ENCODE measurements at regions of chr4 and their contacts with region 1.

Region 1: DNA sequence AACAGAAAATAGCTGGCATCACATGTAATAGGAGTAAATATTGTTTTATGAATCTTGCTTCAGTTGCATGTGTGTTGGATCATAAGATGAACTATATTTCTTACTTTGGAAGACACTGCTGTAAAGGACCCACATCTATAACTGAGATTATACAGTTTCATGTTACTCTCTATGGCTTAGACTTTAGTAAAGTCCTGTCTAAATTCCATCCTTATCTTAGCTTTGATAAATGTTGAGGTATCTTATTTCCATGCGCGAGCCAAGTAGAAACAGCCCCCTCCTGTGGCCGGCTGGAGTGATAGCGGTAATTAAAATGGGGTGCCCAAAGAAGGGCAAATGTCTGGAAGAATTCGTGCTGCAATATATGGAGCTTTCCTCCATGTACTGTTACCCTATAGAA is 43.0 kb downstream of the CCDC158 start:
- DNase-seq: peak; percentile 64
- H3K4me3 Mint-ChIP-seq: no peak overlapping the region
- H3K27ac Mint-ChIP-seq: no peak overlapping the region
- H3K4me1 Mint-ChIP-seq: peaks cover 12% of the 10 kb centered on the region
- H3K27me3 Mint-ChIP-seq: no peaks in the 10 kb centered on the region
- CTCF ChIP-seq: no peak

Region 2: GRCh38 chr4:75623026-75623425 is 754.9 kb before region 1 on chr4:
- CTCF ChIA-PET with region 1: no interaction called
- intact Hi-C with region 1: no loop called
- DNase-seq: no peak
- H3K4me3 Mint-ChIP-seq: no peak overlapping the region
- H3K27ac Mint-ChIP-seq: no peak overlapping the region
- H3K4me1 Mint-ChIP-seq: no peaks in the 10 kb centered on the region
- H3K27me3 Mint-ChIP-seq: no peaks in the 10 kb centered on the region
- CTCF ChIP-seq: no peak

Region 3: DNA sequence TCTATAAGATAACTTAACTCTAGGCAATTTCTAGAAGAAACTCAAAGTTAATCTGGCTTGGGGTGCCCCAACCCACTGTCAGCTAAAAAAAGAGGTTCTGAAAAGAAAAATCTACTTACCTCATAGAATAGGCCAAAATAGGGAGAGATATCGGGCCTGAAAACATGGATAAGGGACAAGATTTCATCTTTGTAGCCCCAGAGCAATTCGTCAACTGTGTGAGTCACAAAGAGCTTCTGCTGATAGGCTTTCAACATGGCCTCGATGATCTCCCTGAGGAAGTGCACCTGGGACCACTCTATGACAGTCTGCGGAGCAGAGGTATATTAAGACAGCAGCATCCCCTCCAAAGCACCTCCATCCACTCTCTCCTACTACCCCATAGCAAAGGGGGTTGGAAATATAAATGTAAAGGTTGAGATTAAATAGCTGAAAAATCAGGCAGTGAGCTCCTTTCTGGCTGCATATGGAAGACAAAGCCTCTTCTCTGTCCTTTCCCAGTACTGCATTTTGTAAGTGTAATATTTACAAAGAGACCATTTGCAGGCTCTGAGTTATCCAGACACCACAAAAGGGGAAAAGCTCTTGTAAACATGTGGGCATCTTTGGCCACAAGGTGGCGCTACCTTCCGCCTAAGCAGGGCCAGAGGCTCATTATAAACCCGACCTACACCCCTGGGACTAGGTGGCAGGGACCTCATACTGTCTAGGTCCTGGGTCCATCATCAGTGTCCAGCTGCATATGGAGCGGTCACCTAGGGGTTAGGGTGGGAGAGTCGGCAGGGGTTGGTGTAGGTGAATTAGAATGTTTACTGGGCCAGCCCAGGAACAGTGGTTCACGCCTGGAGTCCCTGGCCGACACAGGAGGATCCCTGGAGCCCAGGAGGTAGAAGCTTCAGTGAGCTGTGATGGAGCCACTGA is 198.3 kb before region 1 on chr4:
- CTCF ChIA-PET with region 1: interaction called, 32 read pairs
- intact Hi-C with region 1: loop called (anchors 1 kb)
- DNase-seq: peak; percentile 78
- H3K4me3 Mint-ChIP-seq: no peak overlapping the region
- H3K27ac Mint-ChIP-seq: no peak overlapping the region
- H3K4me1 Mint-ChIP-seq: no peaks in the 10 kb centered on the region
- H3K27me3 Mint-ChIP-seq: no peaks in the 10 kb centered on the region
- CTCF ChIP-seq: peak; percentile 79

Region 4: GRCh38 chr4:76251441-76252270 is 126.3 kb before region 1 on chr4 and contains the start of gene FAM47E:
- CTCF ChIA-PET with region 1: interaction called, 13 read pairs
- intact Hi-C with region 1: loop called (anchors 5 kb)
- DNase-seq: peak; percentile 80
- H3K4me3 Mint-ChIP-seq: peak within 1 kb of the TSS; percentile 82
- H3K27ac Mint-ChIP-seq: peak within 1 kb of the TSS; percentile 67
- H3K4me1 Mint-ChIP-seq: peaks cover 9% of the 10 kb centered on the region
- H3K27me3 Mint-ChIP-seq: no peaks in the 10 kb centered on the region
- CTCF ChIP-seq: peak; percentile 41
- total RNA-seq, gene FAM47E: 0.57 and 1.1 TPM in 2 replicates

Region 5: DNA sequence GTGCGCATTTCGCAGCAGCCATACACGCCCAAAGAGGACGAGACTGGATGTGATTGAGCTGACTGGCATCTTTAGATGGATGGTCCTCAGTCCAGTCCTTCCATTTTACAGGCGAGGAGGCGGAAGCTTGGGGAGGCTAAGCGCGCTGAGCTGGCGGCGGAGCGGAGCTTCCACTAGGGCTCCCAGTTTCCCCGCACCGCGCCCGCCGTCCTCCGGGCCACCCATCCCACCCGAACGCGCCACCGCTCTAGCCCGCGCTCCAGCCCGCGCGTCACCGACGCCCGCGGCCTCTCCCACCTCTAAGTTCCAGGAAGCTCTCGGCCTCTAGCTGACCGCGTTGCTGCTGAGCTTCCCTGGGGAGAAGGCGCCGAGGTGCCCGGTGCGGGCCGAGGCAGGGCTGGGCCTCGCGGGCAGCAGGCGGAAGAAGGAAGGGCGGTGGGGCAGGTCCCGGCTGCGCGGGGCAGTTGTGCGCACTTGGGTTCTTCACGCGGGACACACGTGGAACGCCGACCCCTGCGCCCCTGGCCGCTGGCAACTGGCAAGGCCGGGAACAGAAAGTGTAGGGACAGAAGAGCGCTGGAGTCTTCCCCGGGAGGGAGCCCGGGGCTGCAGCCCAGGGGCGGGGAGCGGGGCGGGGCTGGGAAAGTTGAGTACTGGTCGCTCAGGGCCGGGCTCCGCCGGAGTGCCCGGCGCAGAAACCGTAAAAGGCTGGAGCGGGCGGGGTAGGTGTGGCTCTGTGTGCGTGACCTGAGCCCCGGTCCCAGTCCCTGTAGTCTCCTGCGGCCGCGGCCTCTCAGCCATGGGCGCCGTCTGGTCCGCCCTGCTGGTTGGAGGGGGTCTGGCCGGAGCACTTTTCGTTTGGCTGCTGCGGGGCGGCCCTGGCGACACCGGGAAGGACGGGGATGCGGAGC is 71.7 kb before region 1 on chr4 and contains the start of gene STBD1:
- CTCF ChIA-PET with region 1: interaction called, 16 read pairs
- intact Hi-C with region 1: loop called (anchors 2 kb)
- DNase-seq: peak; percentile 77
- H3K4me3 Mint-ChIP-seq: peak within 1 kb of the TSS; percentile 91
- H3K27ac Mint-ChIP-seq: peak within 1 kb of the TSS; percentile 63
- H3K4me1 Mint-ChIP-seq: peaks cover 43% of the 10 kb centered on the region
- H3K27me3 Mint-ChIP-seq: no peaks in the 10 kb centered on the region
- CTCF ChIP-seq: no peak
- total RNA-seq, gene STBD1: 3.2 and 5.0 TPM in 2 replicates

Region 6: GRCh38 chr4:76658231-76659102 is 280.6 kb after region 1 on chr4:
- CTCF ChIA-PET with region 1: no interaction called
- intact Hi-C with region 1: no loop called
- DNase-seq: no peak
- H3K4me3 Mint-ChIP-seq: peak overlapping the region; percentile 32
- H3K27ac Mint-ChIP-seq: peak overlapping the region; percentile 58
- H3K4me1 Mint-ChIP-seq: peaks cover 45% of the 10 kb centered on the region
- H3K27me3 Mint-ChIP-seq: no peaks in the 10 kb centered on the region
- CTCF ChIP-seq: no peak

Measured in Calu3 (cell line).